Spleen (tissue), 13 donors: ENCODE measurements at regions of chr1 and their contacts with region 1.

Region 1: GRCh38 chr1:46527474-46528296 is 23.8 kb downstream of the KNCN start:
- DNase-seq: peak; percentile 89
- H3K4me3 ChIP-seq: no peak overlapping the region
- H3K27ac ChIP-seq: no peak overlapping the region
- H3K4me1 ChIP-seq: peaks cover 0 to 12% (median 2%) of the 10 kb centered on the region in 6 donors
- H3K27me3 ChIP-seq: peaks cover 0 to 86% (median 13%) of the 10 kb centered on the region in 7 donors
- CTCF ChIP-seq: peak; percentile 44 to 93 (median 85)
- POLR2A ChIP-seq: no peak

Region 2: GRCh38 chr1:46445773-46446263 is 81.9 kb before region 1 on chr1:
- intact Hi-C with region 1: loop called (anchors 2 kb)
- DNase-seq: no peak
- H3K4me3 ChIP-seq: no peak overlapping the region
- H3K27ac ChIP-seq: no peak overlapping the region
- H3K4me1 ChIP-seq: peaks cover 0 to 34% (median 23%) of the 10 kb centered on the region in 6 donors
- H3K27me3 ChIP-seq: peaks cover 0 to 64% (median 28%) of the 10 kb centered on the region in 7 donors
- CTCF ChIP-seq: no peak
- POLR2A ChIP-seq: no peak

Region 3: GRCh38 chr1:46724991-46725735 is 197.5 kb after region 1 on chr1:
- intact Hi-C with region 1: loop called (anchors 5 kb)
- DNase-seq: peak; percentile 82
- H3K4me3 ChIP-seq: no peak overlapping the region
- H3K27ac ChIP-seq: no peak overlapping the region
- H3K4me1 ChIP-seq: peaks cover 0 to 7% (median 4%) of the 10 kb centered on the region in 6 donors
- H3K27me3 ChIP-seq: peaks cover 0 to 38% (median 9%) of the 10 kb centered on the region in 7 donors
- CTCF ChIP-seq: peak; percentile 48 to 89 (median 80)
- POLR2A ChIP-seq: no peak

Region 4: GRCh38 chr1:46822248-46822826 is 294.7 kb after region 1 on chr1:
- intact Hi-C with region 1: no loop called
- DNase-seq: no peak
- H3K4me3 ChIP-seq: no peak overlapping the region
- H3K27ac ChIP-seq: no peak overlapping the region
- H3K4me1 ChIP-seq: peaks cover 0 to 6% (median 0%) of the 10 kb centered on the region in 6 donors
- H3K27me3 ChIP-seq: peaks cover 0 to 10% (median 0%) of the 10 kb centered on the region in 7 donors
- CTCF ChIP-seq: no peak
- POLR2A ChIP-seq: no peak